Endothelial cell of umbilical vein (primary cell): ENCODE measurements at regions of chr1 and their contacts with region 1.

Region 1: DNA sequence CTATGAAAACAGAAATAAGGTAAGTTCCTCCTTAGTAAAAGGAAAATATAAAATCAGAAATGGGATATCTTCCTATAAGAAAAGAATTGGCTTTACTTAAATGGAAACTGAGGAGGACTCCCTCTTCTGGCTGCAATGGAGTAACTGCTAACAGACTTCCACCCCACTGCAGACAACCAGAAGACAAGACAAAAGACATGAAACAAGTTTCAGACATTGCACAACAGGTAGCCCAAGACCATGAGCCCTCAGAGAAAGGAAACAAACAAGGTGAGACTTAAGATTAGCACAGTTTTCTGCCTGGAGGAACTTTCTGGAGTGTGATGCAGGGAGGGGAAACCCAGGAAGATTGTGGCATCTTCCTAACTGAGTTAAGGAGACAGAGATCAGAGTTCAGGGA is 17.0 kb upstream of the OLFML2B start:
- DNase-seq: peak; percentile 40
- H3K4me3 ChIP-seq: no peak overlapping the region
- H3K27ac ChIP-seq: no peak overlapping the region
- H3K4me1 ChIP-seq: peaks cover under 1% of the 10 kb centered on the region
- H3K27me3 ChIP-seq: peaks cover 0 to 2% of the 10 kb centered on the region in 2 experiments
- CTCF ChIP-seq: peak; percentile 45 to 65
- POLR2A ChIP-seq: no peak

Region 2: GRCh38 chr1:161738627-161739287 is 301.9 kb before region 1 on chr1:
- CTCF ChIA-PET with region 1: interaction called, 27 read pairs
- POLR2A ChIA-PET with region 1: no interaction called
- dilution Hi-C with region 1: no loop called
- intact Hi-C with region 1: no loop called
- DNase-seq: peak; percentile 44
- H3K4me3 ChIP-seq: no peak overlapping the region
- H3K27ac ChIP-seq: no peak overlapping the region
- H3K4me1 ChIP-seq: peaks cover 3% of the 10 kb centered on the region
- H3K27me3 ChIP-seq: no peaks in the 10 kb centered on the region
- CTCF ChIP-seq: peak; percentile 39 to 43
- POLR2A ChIP-seq: no peak

Region 3: DNA sequence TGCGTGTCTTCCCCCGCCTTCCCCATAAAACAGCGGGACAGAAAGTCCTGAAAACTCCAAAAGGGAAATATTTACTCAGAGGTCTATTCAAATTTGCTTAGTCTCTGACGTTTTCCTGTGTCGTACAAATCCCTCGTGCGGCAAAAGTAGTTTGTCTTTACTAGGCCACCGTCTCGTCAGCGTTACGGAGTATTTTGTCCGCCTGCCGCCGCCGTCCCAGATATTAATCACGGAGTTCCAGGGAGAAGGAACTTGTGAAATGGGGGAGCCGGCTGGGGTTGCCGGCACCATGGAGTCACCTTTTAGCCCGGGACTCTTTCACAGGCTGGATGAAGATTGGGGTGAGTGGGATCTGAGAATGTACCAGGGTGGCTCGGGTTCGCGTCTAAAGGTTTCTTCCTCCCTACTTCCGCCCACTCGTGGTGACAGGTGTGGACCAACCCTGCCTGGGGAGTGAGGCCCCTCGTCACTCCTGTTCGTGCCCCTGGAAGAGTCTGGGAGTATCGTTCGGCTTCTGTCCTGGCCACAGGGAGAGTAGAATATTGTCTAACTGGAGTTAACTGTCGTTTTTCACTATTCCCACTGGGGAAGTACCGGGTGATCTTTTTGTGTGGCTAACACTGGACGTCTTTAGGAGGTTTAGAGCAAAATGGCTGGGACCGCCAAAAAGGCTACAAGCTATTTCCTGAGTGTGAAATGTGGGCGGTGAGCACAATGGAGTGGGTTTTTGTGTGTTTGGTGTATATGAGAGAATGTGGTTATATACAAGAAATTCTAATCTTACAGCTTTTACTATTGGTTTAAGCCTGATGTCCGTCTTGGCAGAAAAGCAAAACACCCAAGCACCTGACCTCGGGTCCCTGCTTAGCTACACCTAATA is 274.3 kb before region 1 on chr1 and contains the start of gene ATF6:
- CTCF ChIA-PET with region 1: interaction called, 68 read pairs
- POLR2A ChIA-PET with region 1: interaction called, 3 read pairs
- dilution Hi-C with region 1: no loop called
- intact Hi-C with region 1: loop called (anchors 10 kb)
- DNase-seq: peak; percentile 97
- H3K4me3 ChIP-seq: peak within 1 kb of the TSS; percentile 64 to 92 (median 84)
- H3K27ac ChIP-seq: peak within 1 kb of the TSS; percentile 88
- H3K4me1 ChIP-seq: peaks cover 30% of the 10 kb centered on the region
- H3K27me3 ChIP-seq: no peaks in the 10 kb centered on the region
- CTCF ChIP-seq: no peak
- POLR2A ChIP-seq: peak; percentile 70
- total RNA-seq, gene ATF6: 38.8 and 40.3 TPM in 2 replicates

Region 4: DNA sequence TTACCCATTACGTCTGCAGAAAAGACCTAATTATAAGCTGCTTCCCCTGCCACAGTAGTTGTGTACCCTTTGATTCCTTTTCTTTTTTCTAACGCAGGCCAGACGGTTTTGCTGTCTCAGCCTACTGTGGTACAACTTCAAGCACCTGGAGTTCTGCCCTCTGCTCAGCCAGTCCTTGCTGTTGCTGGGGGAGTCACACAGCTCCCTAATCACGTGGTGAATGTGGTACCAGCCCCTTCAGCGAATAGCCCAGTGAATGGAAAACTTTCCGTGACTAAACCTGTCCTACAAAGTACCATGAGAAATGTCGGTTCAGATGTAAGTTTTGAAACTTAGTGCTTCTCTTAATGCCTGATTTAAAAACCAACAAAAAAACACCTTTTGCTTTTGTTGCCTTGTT is 238.7 kb before region 1 on chr1:
- CTCF ChIA-PET with region 1: interaction called, 754 read pairs
- POLR2A ChIA-PET with region 1: no interaction called
- dilution Hi-C with region 1: no loop called
- intact Hi-C with region 1: no loop called
- DNase-seq: no peak
- H3K4me3 ChIP-seq: no peak overlapping the region
- H3K27ac ChIP-seq: no peak overlapping the region
- H3K4me1 ChIP-seq: no peaks in the 10 kb centered on the region
- H3K27me3 ChIP-seq: no peaks in the 10 kb centered on the region
- CTCF ChIP-seq: no peak
- POLR2A ChIP-seq: no peak

Region 5: DNA sequence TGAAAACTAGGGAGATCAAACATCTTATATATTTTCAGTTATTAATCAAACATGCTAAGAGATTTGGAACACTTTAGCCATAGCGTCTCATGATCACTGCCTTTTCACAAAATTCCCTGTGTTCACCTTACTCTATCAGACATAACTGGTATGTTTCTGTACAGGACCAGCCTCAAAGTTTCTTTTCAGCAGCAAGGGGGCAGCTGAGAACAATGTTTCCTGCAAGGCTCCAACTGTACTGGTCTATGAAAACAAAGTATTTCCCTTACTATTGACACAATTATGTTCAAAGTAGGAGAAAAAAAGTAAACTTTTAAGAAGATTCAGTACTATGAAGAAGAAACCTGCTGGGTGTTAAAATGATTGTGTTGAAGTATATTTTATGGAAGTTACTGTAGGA is 176.1 kb before region 1 on chr1:
- CTCF ChIA-PET with region 1: interaction called, 82 read pairs
- POLR2A ChIA-PET with region 1: no interaction called
- dilution Hi-C with region 1: no loop called
- intact Hi-C with region 1: loop called (anchors 1 kb)
- DNase-seq: peak; percentile 69
- H3K4me3 ChIP-seq: no peak overlapping the region
- H3K27ac ChIP-seq: no peak overlapping the region
- H3K4me1 ChIP-seq: peaks cover 6% of the 10 kb centered on the region
- H3K27me3 ChIP-seq: no peaks in the 10 kb centered on the region
- CTCF ChIP-seq: peak; percentile 7 to 27
- POLR2A ChIP-seq: no peak